ENCODE measurements at regions of chr16 and their contacts with region 1.

Region 1: GRCh38 chr16:15650698-15651171 is 690 bp downstream of the NDE1 start:
- DNase-seq: peak; percentile 79
- H3K4me3 Mint-ChIP-seq: peak overlapping the region; percentile 100
- H3K27ac Mint-ChIP-seq: peak overlapping the region; percentile 99
- H3K4me1 Mint-ChIP-seq: peaks cover 42% of the 10 kb centered on the region
- H3K27me3 Mint-ChIP-seq: no peaks in the 10 kb centered on the region

Region 2: DNA sequence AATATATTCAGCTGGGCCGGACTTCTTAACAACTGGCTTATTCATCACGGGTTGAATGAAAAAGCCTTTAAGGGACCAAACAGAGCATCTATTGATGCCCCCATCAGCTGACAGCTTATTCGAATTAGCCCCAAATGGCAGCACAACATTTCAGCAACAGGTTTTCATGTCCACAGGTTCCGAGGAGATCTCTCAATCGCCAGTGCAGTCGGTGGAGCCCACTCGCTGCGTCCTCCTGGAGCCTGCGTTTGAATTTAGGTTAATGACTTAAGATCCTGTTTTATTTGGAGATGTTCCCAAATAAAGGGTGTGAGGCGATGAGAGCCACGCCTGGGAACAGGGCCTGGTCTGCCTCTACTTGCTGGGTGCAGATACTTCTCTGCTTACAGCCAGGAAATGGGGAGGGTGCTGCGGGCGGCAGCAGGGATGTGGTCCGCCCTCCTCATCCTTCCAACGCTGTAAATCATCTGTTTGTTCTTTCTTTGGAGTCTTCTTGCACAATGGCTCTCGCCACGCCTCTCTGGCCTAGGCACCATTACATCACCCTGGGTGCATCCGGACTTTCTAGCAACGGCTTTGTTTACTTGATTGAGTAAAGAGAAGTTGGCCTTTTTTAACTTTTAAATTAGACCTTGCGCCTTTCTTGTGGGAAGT is 21.9 kb after region 1 on chr16:
- CTCF ChIA-PET with region 1: interaction called, 3 read pairs
- intact Hi-C with region 1: loop called (anchors 1 kb)
- DNase-seq: peak; percentile 90
- H3K4me3 Mint-ChIP-seq: peak overlapping the region; percentile 62
- H3K27ac Mint-ChIP-seq: peak overlapping the region; percentile 89
- H3K4me1 Mint-ChIP-seq: peaks cover 43% of the 10 kb centered on the region
- H3K27me3 Mint-ChIP-seq: no peaks in the 10 kb centered on the region

Region 3: GRCh38 chr16:15682105-15682570 is 31.4 kb after region 1 on chr16:
- CTCF ChIA-PET with region 1: no interaction called
- intact Hi-C with region 1: loop called (anchors 1 kb)
- DNase-seq: peak; percentile 72
- H3K4me3 Mint-ChIP-seq: no peak overlapping the region
- H3K27ac Mint-ChIP-seq: no peak overlapping the region
- H3K4me1 Mint-ChIP-seq: peaks cover 6% of the 10 kb centered on the region
- H3K27me3 Mint-ChIP-seq: no peaks in the 10 kb centered on the region

Measured in activated naive CD4-positive, alpha-beta T cell treated with anti-CD3 and anti-CD28 coated beads for 36 hours (primary cell).